Thyroid gland (tissue), 4 donors: ENCODE measurements at regions of chr5 and their contacts with region 1.

Region 1: GRCh38 chr5:168372356-168372946 is 81.0 kb downstream of the WWC1 start:
- DNase-seq: no peak
- H3K4me3 ChIP-seq: no peak overlapping the region
- H3K27ac ChIP-seq: no peak overlapping the region
- H3K4me1 ChIP-seq: peaks cover 14% of the 10 kb centered on the region in 2 donors
- H3K27me3 ChIP-seq: no peaks in the 10 kb centered on the region
- CTCF ChIP-seq: no peak
- POLR2A ChIP-seq: no peak

Region 2: GRCh38 chr5:168275940-168276339 is 96.5 kb before region 1 on chr5:
- intact Hi-C with region 1: loop called (anchors 5 kb)
- DNase-seq: no peak
- H3K4me3 ChIP-seq: no peak overlapping the region
- H3K27ac ChIP-seq: no peak overlapping the region
- H3K4me1 ChIP-seq: peaks cover 11% of the 10 kb centered on the region in 2 donors
- H3K27me3 ChIP-seq: no peaks in the 10 kb centered on the region
- CTCF ChIP-seq: no peak
- POLR2A ChIP-seq: no peak

Region 3: GRCh38 chr5:168328814-168329213 is 43.6 kb before region 1 on chr5:
- intact Hi-C with region 1: no loop called
- DNase-seq: peak; percentile 23 to 44
- H3K4me3 ChIP-seq: no peak overlapping the region
- H3K27ac ChIP-seq: peak overlapping the region in 2 of 3 donors; percentile 6 to 62
- H3K4me1 ChIP-seq: peaks cover 14 to 20% of the 10 kb centered on the region in 2 donors
- H3K27me3 ChIP-seq: no peaks in the 10 kb centered on the region
- CTCF ChIP-seq: no peak
- POLR2A ChIP-seq: no peak

Region 4: DNA sequence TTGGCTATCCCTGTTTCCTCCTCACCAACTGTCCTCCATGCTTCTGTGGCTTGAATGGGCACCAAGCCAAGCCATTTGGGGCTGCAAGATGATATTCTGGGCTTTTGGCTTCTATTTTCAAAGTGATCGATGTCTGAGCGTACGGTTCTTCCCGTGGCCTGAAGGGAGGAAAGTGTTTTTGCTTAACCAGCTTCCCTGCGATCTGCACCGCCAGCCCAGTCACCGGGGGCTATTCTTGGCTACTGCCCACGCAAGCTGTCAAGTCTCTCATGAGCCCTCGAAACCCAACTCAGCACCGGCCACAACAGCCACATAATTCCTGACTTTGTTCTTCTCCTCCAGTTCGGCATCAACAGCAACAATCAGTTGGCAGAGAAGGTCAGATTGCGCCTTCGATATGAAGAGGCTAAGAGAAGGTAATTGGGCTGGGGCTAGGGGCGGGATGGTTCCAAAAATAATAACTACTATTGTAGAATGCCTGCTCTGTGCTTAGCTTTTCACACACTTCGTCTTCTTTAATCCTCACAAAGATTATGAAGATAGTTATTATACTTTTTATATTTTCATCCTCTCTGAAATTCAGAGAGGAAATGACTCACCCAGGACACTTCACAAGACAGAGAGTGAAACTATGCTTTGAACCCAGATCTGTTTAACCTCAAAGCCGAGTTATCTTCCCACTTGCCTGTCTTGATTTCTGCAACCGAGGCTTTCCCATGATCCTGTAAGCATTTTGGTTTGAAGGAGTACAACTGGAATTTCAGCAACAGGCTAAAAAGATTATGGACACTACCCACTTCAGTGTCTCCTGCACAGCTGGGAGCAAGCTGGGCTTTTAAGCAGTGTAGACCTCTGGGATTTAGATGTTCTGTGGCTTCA is 37.4 kb after region 1 on chr5:
- intact Hi-C with region 1: no loop called
- DNase-seq: no peak
- H3K4me3 ChIP-seq: no peak overlapping the region
- H3K27ac ChIP-seq: no peak overlapping the region
- H3K4me1 ChIP-seq: peaks cover 3 to 5% of the 10 kb centered on the region in 2 donors
- H3K27me3 ChIP-seq: no peaks in the 10 kb centered on the region
- CTCF ChIP-seq: no peak
- POLR2A ChIP-seq: no peak

Region 5: GRCh38 chr5:168486136-168486879 is 113.9 kb after region 1 on chr5 and contains the start of gene RARS1:
- intact Hi-C with region 1: no loop called
- DNase-seq: peak; percentile 93 to 96
- H3K4me3 ChIP-seq: peak within 1 kb of the TSS; percentile 60 to 94 (median 78)
- H3K27ac ChIP-seq: peak within 1 kb of the TSS in 2 of 3 donors; percentile 51 to 69
- H3K4me1 ChIP-seq: peaks cover 6 to 13% of the 10 kb centered on the region in 2 donors
- H3K27me3 ChIP-seq: no peaks in the 10 kb centered on the region
- CTCF ChIP-seq: peak; percentile 63 to 99 (median 96)
- POLR2A ChIP-seq: peak in 1 of 2 donors; percentile 84
- total RNA-seq, gene RARS1: 72.2 to 87.9 (median 74.2) TPM